ENCODE measurements at regions of chr4 and their contacts with region 1.

Region 1: DNA sequence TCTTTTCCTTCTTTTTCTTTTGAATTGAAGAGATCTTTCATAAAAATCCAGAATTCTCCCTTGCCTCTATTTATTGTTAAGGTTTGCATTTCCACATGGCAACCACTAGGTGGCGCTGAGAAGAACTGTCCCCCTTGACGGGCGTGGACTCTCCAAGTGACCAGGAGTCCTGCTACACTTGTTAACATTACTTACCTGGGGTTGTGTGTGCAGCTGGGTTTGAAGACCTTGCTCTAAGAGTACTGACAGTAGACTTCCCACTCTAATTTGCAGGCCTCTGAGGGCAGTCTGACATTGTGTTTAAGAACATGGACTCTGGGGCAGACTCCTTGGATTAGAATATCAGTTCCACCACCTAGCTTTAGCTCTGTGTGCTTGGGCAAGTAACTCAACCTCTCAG is 52.8 kb downstream of the GPRIN3 start:
- DNase-seq: peak in 8 of 9 experiments; percentile 30 to 76 (median 50)
- ATAC-seq: peak; percentile 56
- H3K4me3 ChIP-seq: no peak overlapping the region
- H3K4me3 Mint-ChIP-seq: no peak overlapping the region
- H3K27ac ChIP-seq: peak overlapping the region in 1 of 2 experiments; percentile 59
- H3K27ac Mint-ChIP-seq: peak overlapping the region; percentile 20
- H3K4me1 ChIP-seq: peaks cover 16% of the 10 kb centered on the region
- H3K4me1 Mint-ChIP-seq: peaks cover 75% of the 10 kb centered on the region
- H3K27me3 ChIP-seq: no peaks in the 10 kb centered on the region
- H3K27me3 Mint-ChIP-seq: no peaks in the 10 kb centered on the region
- CTCF ChIP-seq: peak; percentile 96

Region 2: DNA sequence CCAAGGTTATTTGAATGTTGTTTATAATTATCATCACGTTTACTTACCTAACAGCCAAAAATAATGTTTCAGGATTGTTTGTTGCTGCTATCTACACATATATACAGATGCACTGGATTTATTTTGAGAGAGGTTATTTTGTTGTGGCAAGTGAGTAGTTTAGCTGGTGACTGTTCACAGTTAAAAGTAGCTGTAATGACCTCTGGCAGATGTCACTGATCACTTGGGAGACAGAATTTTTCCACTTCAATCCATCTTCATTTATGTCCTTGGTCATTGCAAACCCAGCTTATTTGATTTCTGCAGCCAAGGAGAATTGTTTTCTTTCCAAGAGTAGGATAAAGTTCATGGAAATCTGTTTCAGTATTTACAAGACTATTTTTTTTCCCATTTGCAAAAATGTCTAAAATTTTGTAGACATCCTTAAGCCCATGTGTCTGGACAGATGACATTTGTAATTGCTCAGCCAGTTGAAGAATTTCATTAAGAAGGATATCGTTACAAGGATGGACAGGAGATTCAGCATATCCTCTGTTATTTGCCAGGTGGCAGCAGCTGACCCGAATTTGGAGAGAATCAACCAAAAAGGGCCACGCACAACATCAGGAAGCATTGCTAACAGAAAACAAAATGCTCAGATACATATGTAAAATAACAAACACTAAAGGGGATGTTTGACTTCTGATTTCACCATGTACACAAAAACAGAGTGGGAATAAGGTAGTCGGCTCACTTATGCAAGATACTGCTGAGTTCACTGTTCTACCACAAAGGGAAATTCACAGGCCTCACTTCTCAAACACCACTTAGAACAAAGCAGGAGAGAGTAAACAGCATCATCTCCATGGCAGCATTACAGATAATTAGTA is 11.7 kb before region 1 on chr4:
- CTCF ChIA-PET with region 1: interaction called, 21 read pairs
- POLR2A ChIA-PET with region 1: interaction called, 3 read pairs
- intact Hi-C with region 1: no loop called
- DNase-seq: peak in 2 of 9 experiments; percentile 72 to 83
- ATAC-seq: peak; percentile 80
- H3K4me3 ChIP-seq: no peak overlapping the region
- H3K4me3 Mint-ChIP-seq: no peak overlapping the region
- H3K27ac ChIP-seq: peak overlapping the region in 1 of 2 experiments; percentile 59
- H3K27ac Mint-ChIP-seq: peak overlapping the region; percentile 71
- H3K4me1 ChIP-seq: peaks cover 13% of the 10 kb centered on the region
- H3K4me1 Mint-ChIP-seq: peaks cover 43% of the 10 kb centered on the region
- H3K27me3 ChIP-seq: no peaks in the 10 kb centered on the region
- H3K27me3 Mint-ChIP-seq: no peaks in the 10 kb centered on the region
- CTCF ChIP-seq: no peak

Region 3: GRCh38 chr4:89268679-89269078 is 13.8 kb after region 1 on chr4:
- CTCF ChIA-PET with region 1: interaction called, 8 read pairs
- POLR2A ChIA-PET with region 1: interaction called, 3 read pairs
- intact Hi-C with region 1: loop called in 1 of 2 experiments (anchors 2 kb)
- DNase-seq: no peak
- ATAC-seq: no peak
- H3K4me3 ChIP-seq: no peak overlapping the region
- H3K4me3 Mint-ChIP-seq: no peak overlapping the region
- H3K27ac ChIP-seq: no peak overlapping the region
- H3K27ac Mint-ChIP-seq: no peak overlapping the region
- H3K4me1 ChIP-seq: peaks cover 4% of the 10 kb centered on the region
- H3K4me1 Mint-ChIP-seq: peaks cover 75% of the 10 kb centered on the region
- H3K27me3 ChIP-seq: no peaks in the 10 kb centered on the region
- H3K27me3 Mint-ChIP-seq: no peaks in the 10 kb centered on the region
- CTCF ChIP-seq: no peak

Region 4: GRCh38 chr4:89283226-89284009 is 28.6 kb after region 1 on chr4:
- CTCF ChIA-PET with region 1: interaction called, 12 read pairs
- POLR2A ChIA-PET with region 1: interaction called, 3 read pairs
- intact Hi-C with region 1: loop called in 1 of 2 experiments (anchors 2 kb)
- DNase-seq: peak in 8 of 9 experiments; percentile 34 to 86 (median 59)
- ATAC-seq: peak; percentile 80
- H3K4me3 ChIP-seq: peak overlapping the region in 1 of 2 experiments; percentile 36
- H3K4me3 Mint-ChIP-seq: peak overlapping the region; percentile 68
- H3K27ac ChIP-seq: peak overlapping the region; percentile 69 to 94
- H3K27ac Mint-ChIP-seq: peak overlapping the region; percentile 93
- H3K4me1 ChIP-seq: peaks cover 45% of the 10 kb centered on the region
- H3K4me1 Mint-ChIP-seq: peaks cover 67% of the 10 kb centered on the region
- H3K27me3 ChIP-seq: no peaks in the 10 kb centered on the region
- H3K27me3 Mint-ChIP-seq: no peaks in the 10 kb centered on the region
- CTCF ChIP-seq: no peak

Region 5: GRCh38 chr4:89294573-89295269 is 39.9 kb after region 1 on chr4:
- CTCF ChIA-PET with region 1: interaction called, 37 read pairs
- POLR2A ChIA-PET with region 1: interaction called, 8 read pairs
- intact Hi-C with region 1: no loop called
- DNase-seq: peak in 2 of 9 experiments; percentile 78 to 88
- ATAC-seq: peak; percentile 74
- H3K4me3 ChIP-seq: peak overlapping the region in 1 of 2 experiments; percentile 21
- H3K4me3 Mint-ChIP-seq: peak overlapping the region; percentile 60
- H3K27ac ChIP-seq: peak overlapping the region; percentile 42 to 82
- H3K27ac Mint-ChIP-seq: peak overlapping the region; percentile 89
- H3K4me1 ChIP-seq: peaks cover 80% of the 10 kb centered on the region
- H3K4me1 Mint-ChIP-seq: peaks cover 89% of the 10 kb centered on the region
- H3K27me3 ChIP-seq: no peaks in the 10 kb centered on the region
- H3K27me3 Mint-ChIP-seq: no peaks in the 10 kb centered on the region
- CTCF ChIP-seq: no peak

Region 6: GRCh38 chr4:89307446-89308160 is 52.8 kb after region 1 on chr4 and contains the start of gene GPRIN3:
- CTCF ChIA-PET with region 1: interaction called, 14 read pairs
- POLR2A ChIA-PET with region 1: interaction called, 3 read pairs
- intact Hi-C with region 1: loop called (anchors 1 to 2 kb)
- DNase-seq: peak; percentile 39 to 83 (median 68)
- ATAC-seq: peak; percentile 63
- H3K4me3 ChIP-seq: peak within 1 kb of the TSS; percentile 67 to 88
- H3K4me3 Mint-ChIP-seq: peak within 1 kb of the TSS; percentile 93
- H3K27ac ChIP-seq: peak within 1 kb of the TSS; percentile 59 to 70
- H3K27ac Mint-ChIP-seq: peak within 1 kb of the TSS; percentile 90
- H3K4me1 ChIP-seq: peaks cover 38% of the 10 kb centered on the region
- H3K4me1 Mint-ChIP-seq: peaks cover 54% of the 10 kb centered on the region
- H3K27me3 ChIP-seq: no peaks in the 10 kb centered on the region
- H3K27me3 Mint-ChIP-seq: no peaks in the 10 kb centered on the region
- CTCF ChIP-seq: no peak
- total RNA-seq, gene GPRIN3: 32.1 to 34.4 TPM

Region 7: DNA sequence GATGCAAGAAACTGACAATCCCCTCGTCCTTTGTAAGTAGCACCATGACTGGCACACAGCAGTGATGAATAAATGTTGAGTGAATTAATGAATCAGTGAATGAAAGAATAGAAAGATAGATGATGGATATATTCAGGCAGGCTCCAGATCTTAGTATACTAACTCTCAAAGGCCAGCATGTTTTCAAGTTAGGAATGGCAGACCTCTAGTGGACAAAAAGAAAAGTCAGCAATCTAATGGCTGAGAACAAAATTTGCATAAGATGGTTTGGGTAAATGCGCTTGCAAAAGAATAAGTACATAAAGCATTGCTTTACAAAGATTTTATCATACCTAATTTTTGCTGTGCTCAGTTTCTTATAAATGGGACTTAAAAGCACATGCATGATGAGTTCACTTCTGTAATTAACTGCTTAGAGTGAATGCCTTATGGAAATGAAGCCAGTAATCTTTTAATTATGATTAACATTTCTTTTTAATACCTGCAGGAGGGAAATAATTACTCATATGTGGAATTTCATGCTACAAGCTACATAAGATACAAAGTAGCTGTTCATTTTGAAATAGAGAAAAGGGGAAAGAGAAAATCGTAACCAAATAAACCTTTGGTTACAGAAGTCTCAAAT is 179.6 kb after region 1 on chr4:
- CTCF ChIA-PET with region 1: interaction called, 43 read pairs
- POLR2A ChIA-PET with region 1: no interaction called
- intact Hi-C with region 1: loop called in 1 of 2 experiments (anchors 1 kb)
- DNase-seq: peak in 2 of 9 experiments; percentile 57 to 70
- ATAC-seq: peak; percentile 67
- H3K4me3 ChIP-seq: no peak overlapping the region
- H3K4me3 Mint-ChIP-seq: no peak overlapping the region
- H3K27ac ChIP-seq: no peak overlapping the region
- H3K27ac Mint-ChIP-seq: no peak overlapping the region
- H3K4me1 ChIP-seq: peaks cover 6% of the 10 kb centered on the region
- H3K4me1 Mint-ChIP-seq: peaks cover 7% of the 10 kb centered on the region
- H3K27me3 ChIP-seq: no peaks in the 10 kb centered on the region
- H3K27me3 Mint-ChIP-seq: peaks cover 4% of the 10 kb centered on the region
- CTCF ChIP-seq: peak; percentile 78